ENCODE measurements at regions of chr13 and their contacts with region 1.

Region 1: DNA sequence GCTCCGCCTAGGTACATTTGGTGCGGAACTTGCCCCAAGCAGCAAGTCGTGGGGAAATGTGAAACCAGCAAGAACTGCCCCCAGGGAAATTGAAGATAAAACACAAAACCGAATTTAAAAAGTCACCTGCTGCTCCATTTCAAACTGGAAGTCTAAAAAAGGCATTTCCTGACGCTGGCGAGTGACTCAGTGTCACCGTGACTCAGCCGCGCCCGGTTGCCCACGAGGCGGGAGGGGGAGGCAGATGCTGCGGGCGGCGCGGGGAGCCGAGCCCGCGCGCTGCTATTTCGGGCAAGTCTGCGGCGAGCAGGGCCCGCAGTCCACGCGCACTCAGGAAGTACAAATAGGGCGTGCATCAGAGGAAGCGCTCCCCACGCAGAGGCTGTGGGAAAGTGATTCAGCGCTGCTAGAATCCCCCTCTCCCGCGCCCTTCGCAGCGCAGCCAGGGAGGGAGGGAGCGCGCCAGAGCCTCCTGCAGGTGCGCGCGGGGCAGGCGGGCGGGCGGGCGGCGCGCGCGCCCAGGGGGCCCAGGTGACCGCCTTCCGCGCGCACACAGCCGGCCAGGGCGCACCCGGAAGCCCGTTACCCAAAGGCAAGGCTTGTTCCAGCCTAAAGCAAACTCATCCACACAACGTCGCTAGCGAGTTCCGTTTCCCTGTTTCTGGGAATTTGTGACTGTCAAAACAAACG is 168.8 kb downstream of the COL4A1 start:
- DNase-seq: peak; percentile 80
- ATAC-seq: peak; percentile 76 to 83

Region 2: GRCh38 chr13:109869312-109870237 is 268.6 kb before region 1 on chr13:
- intact Hi-C with region 1: loop called in 1 of 2 experiments (anchors 10 kb)
- DNase-seq: peak; percentile 89
- ATAC-seq: peak; percentile 90 to 91

Region 3: GRCh38 chr13:110319774-110320509 is 181.8 kb after region 1 on chr13:
- intact Hi-C with region 1: no loop called
- DNase-seq: no peak
- ATAC-seq: peak; percentile 38 to 43

Measured in left cardiac atrium (tissue), 4 donors.